ENCODE measurements at regions of chr4 and their contacts with region 1.

Region 1: DNA sequence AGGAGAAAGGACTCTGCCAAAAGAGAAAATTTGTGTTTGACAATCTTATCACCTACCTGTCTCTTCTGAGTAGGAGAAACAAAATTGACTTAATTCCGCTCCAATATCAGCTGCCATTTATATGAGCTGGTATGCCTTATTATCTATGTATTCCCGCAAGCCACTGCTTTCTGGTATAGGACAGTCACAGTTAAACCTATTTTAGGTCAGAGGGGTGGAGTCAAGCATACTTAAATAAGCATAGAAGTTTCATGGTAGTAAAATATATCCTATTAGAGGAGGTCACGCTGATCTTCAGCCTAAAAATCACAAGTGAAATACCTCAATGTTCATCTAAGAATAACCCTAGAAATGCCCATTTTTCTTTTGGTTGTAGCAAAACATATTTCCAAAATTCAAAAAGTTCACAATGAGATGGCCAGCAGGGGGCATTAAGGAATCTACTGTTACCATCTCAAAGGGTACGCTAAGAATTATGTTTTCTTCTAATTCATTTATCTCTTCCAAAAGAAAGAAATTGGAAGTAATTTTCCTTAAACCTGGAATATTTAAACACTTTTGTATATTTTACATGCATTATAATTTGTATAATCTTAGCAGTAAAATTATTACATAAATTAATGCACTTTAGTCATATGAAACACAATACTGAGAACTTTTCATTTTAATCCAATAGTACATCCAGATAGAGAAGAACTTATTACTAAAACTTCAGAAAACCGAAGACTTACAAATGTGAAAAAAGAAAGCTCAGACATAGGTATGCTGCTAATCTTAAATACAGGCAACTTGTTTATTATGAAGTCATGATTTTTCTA is 10.5 kb downstream of the PPAT start:
- DNase-seq: peak in 1 of 2 donors; percentile 30
- ATAC-seq: peak in 5 of 8 donors; percentile 55 to 67 (median 62)
- H3K4me3 ChIP-seq: peak overlapping the region in 6 of 10 donors; percentile 21 to 31 (median 26)
- H3K27ac ChIP-seq: no peak overlapping the region
- H3K4me1 ChIP-seq: peaks cover 0 to 5% (median 0%) of the 10 kb centered on the region in 9 donors
- H3K27me3 ChIP-seq: no peaks in the 10 kb centered on the region
- CTCF ChIP-seq: peak; percentile 28 to 77 (median 68)

Region 2: GRCh38 chr4:56530269-56531148 is 105.6 kb after region 1 on chr4:
- intact Hi-C with region 1: loop called in 3 of 10 experiments (anchors 10 kb)
- DNase-seq: peak; percentile 83 to 88
- ATAC-seq: peak; percentile 97 to 99 (median 98)
- H3K4me3 ChIP-seq: peak overlapping the region; percentile 39 to 71 (median 58)
- H3K27ac ChIP-seq: no peak overlapping the region
- H3K4me1 ChIP-seq: peaks cover 0 to 15% (median 8%) of the 10 kb centered on the region in 9 donors
- H3K27me3 ChIP-seq: peaks cover 0 to 44% (median 17%) of the 10 kb centered on the region in 7 donors
- CTCF ChIP-seq: no peak

Region 3: GRCh38 chr4:56544573-56545131 is 119.7 kb after region 1 on chr4:
- intact Hi-C with region 1: loop called in 8 of 10 experiments (anchors 2 to 10 kb)
- DNase-seq: peak; percentile 80 to 88
- ATAC-seq: peak; percentile 96 to 100 (median 99)
- H3K4me3 ChIP-seq: peak overlapping the region in 9 of 10 donors; percentile 18 to 47 (median 43)
- H3K27ac ChIP-seq: no peak overlapping the region
- H3K4me1 ChIP-seq: peaks cover 0 to 5% (median 0%) of the 10 kb centered on the region in 9 donors
- H3K27me3 ChIP-seq: peaks cover 0 to 18% (median 0%) of the 10 kb centered on the region in 7 donors
- CTCF ChIP-seq: peak; percentile 93 to 100 (median 99)

Region 4: GRCh38 chr4:56799824-56800756 is 375.2 kb after region 1 on chr4:
- intact Hi-C with region 1: loop called in 6 of 10 experiments (anchors 10 kb)
- DNase-seq: peak; percentile 80 to 85
- ATAC-seq: peak; percentile 95 to 99 (median 97)
- H3K4me3 ChIP-seq: peak overlapping the region; percentile 33 to 66 (median 64)
- H3K27ac ChIP-seq: peak overlapping the region in 9 of 10 donors; percentile 7 to 74 (median 52)
- H3K4me1 ChIP-seq: peaks cover 0 to 10% (median 3%) of the 10 kb centered on the region in 9 donors
- H3K27me3 ChIP-seq: no peaks in the 10 kb centered on the region
- CTCF ChIP-seq: peak; percentile 66 to 97 (median 91)

Region 5: DNA sequence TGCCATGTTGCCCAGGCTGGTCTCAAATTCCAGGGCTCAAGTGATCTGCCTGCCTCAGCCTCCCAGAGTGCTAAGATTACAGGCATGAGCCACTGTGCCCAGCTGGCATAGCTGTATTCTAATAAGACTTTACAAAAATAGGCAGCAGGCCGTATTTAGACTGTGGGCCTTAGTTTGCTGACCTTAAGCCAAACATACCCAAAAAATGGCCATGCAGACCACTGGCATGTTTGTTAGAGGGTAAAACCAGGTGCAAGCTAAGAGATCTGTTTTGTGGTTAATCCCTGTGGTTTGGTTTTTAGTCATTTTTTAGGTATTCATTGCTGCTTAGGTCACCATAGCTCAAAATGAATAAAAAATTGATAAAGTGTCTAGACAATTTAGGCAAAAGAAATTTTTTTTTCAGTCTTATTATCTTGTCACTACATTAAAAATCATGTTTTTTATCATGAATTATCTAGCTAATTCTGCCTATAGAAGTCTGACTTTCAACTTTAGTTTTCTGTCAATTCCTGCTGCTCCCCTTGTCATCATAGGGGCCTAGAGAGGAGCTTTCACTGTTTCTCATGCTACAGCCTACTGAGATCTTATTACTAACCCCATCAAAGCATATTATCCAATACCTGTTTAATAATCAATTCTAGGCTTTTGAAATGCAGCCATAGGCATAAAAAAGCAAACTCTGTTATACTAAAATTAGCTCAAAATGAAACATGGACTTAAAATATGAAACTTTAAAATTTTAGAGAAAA is 404.1 kb after region 1 on chr4:
- intact Hi-C with region 1: loop called in 7 of 10 experiments (anchors 10 kb)
- DNase-seq: no peak
- ATAC-seq: peak in 1 of 8 donors; percentile 49
- H3K4me3 ChIP-seq: no peak overlapping the region
- H3K27ac ChIP-seq: no peak overlapping the region
- H3K4me1 ChIP-seq: peaks cover 0 to 4% (median 0%) of the 10 kb centered on the region in 9 donors
- H3K27me3 ChIP-seq: peaks cover 0 to 7% (median 0%) of the 10 kb centered on the region in 7 donors
- CTCF ChIP-seq: no peak

Region 6: GRCh38 chr4:56843421-56843899 is 418.6 kb after region 1 on chr4:
- intact Hi-C with region 1: loop called in 8 of 10 experiments (anchors 5 to 10 kb)
- DNase-seq: no peak
- ATAC-seq: peak in 2 of 8 donors; percentile 16 to 21
- H3K4me3 ChIP-seq: no peak overlapping the region
- H3K27ac ChIP-seq: no peak overlapping the region
- H3K4me1 ChIP-seq: no peaks in the 10 kb centered on the region
- H3K27me3 ChIP-seq: no peaks in the 10 kb centered on the region
- CTCF ChIP-seq: no peak

Measured in heart right ventricle (tissue), 16 donors.